Activated T-helper 1 cell treated with anti-CD3 and anti-CD28 coated beads, Interleukin-12 subunit alpha, Interleukin-12 subunit beta, Interleukin-2, Interleukin-4 antibody, amounts not matched to agents 30 ng/mL and 10 ng/mL and 1 ng/mL, durations not matched to agents 14 hours and 24 hours and 36 hours (primary cell): ENCODE measurements at regions of chr11 and their contacts with region 1.

Region 1: DNA sequence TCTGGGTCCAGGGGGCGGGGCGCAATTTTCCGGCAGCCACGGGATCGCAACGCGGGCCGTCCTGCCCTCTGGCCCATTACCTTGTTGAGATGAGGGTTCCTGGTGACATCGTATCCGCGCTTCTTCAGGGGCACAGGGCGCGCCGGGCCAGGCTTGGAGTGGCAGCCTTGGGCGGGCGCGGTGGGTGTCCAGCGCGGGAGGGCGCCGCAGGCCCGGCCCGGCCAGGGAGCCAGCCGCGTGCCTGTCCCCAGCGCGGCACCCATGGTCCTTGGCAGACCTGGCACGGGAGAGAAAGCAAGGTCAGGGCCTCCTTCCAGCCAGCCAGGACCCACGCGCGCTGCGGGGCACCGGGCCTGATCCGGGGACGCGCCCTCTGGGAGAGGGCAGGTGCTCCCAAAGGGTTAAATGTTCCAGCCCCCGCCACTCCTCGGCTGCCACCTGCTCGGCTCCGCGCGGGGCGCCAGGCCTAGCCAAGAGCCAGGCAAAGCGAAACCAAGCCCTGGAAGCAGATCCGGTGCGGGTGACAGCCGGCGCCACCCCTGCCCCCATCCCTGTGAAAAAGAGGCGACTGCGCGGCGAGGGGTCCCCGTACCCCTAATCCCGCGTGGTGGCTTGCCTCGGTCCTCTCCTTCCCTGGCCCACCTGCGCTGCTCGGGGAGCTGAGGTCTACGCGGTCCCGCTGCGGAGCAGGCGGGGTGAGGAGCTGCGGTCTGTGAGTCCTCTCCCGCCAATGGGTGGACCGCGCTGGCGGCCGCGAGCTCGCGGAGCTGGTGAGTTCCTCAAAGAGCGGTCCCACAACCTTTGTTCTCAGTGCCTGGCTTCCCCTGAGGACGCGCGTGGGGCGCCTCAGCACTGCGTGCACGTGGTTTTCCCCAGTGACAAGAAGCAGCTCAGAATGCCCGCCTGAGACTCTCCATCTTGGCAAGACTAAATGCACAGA is at the start of gene ME3:
- DNase-seq: peak; percentile 47
- H3K4me3 Mint-ChIP-seq: peak within 1 kb of the TSS; percentile 83
- H3K27ac Mint-ChIP-seq: peak within 1 kb of the TSS; percentile 79
- H3K4me1 Mint-ChIP-seq: peaks cover 18% of the 10 kb centered on the region
- H3K27me3 Mint-ChIP-seq: peaks cover 31% of the 10 kb centered on the region
- total RNA-seq, gene ME3: 12.8 and 13.1 TPM in 2 replicates

Region 2: DNA sequence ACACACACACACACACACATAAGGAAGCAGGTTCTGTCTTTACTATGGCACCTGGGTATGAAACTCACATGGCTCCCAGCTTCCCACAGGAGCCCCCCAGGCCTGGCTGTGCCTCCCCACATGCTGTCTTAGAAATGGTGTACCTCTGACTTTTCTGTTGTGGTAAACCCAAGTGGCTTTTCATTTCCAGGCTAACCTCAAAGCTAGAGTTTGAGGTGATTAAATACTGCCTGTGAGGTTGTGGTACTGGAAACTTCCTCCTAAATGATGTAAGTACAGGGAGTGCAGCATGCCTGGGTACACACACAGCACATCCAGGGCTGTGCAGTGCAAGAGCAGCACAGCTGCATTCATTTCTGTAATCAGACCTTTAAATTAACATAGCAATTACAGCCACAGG is 34.0 kb before region 1 on chr11:
- intact Hi-C with region 1: loop called (anchors 5 kb)
- DNase-seq: peak; percentile 40
- H3K4me3 Mint-ChIP-seq: no peak overlapping the region
- H3K27ac Mint-ChIP-seq: peak overlapping the region; percentile 33
- H3K4me1 Mint-ChIP-seq: peaks cover 51% of the 10 kb centered on the region
- H3K27me3 Mint-ChIP-seq: peaks cover 20% of the 10 kb centered on the region